Left ventricle myocardium inferior (tissue), 1 donor: ENCODE measurements at regions of chr13 and their contacts with region 1.

Region 1: GRCh38 chr13:75850916-75851315 is 214.8 kb downstream of the LMO7 start:
- DNase-seq: no peak
- H3K4me3 ChIP-seq: no peak overlapping the region
- H3K27ac ChIP-seq: no peak overlapping the region
- H3K4me1 ChIP-seq: peaks cover 24% of the 10 kb centered on the region
- H3K27me3 ChIP-seq: no peaks in the 10 kb centered on the region
- CTCF ChIP-seq: no peak

Region 2: GRCh38 chr13:75691183-75691582 is 159.7 kb before region 1 on chr13:
- intact Hi-C with region 1: loop called (anchors 10 kb)
- DNase-seq: no peak
- H3K4me3 ChIP-seq: no peak overlapping the region
- H3K27ac ChIP-seq: no peak overlapping the region
- H3K4me1 ChIP-seq: no peaks in the 10 kb centered on the region
- H3K27me3 ChIP-seq: no peaks in the 10 kb centered on the region
- CTCF ChIP-seq: no peak

Region 3: DNA sequence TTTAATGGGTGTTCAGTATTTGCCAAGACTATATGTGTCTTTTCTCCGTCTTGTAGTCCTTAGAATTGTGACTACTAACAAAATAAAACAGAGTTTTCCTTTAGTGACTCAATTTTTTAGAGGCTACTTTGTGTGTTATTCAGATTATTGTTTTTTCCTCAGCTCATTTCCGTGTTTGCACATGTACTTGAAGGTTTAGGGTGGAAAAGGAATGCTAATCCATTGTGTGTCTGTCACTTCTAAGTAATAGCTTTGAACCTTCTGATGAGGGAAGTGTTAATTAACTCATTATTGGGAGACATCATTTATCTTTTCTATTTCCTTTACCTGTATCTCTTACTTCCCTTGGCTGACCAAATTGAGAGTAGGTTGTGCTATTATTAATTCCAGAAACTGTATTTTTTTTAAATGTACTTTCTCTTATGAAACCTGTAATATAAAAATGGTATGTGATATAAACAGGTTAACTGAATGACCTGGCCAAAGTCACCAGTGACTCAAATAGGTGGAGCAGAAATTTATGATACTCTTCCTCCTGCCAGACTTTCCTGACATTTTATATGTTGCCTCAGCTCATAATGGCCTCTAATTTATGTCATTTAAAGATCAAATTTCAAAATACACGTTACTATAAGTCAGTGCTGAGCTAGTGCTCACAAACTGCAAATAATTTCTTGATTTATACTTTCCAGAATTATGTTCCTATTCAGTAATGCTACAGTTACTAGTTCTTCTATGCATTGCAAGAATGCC is 126.0 kb before region 1 on chr13:
- intact Hi-C with region 1: no loop called
- DNase-seq: no peak
- H3K4me3 ChIP-seq: no peak overlapping the region
- H3K27ac ChIP-seq: no peak overlapping the region
- H3K4me1 ChIP-seq: peaks cover 5% of the 10 kb centered on the region
- H3K27me3 ChIP-seq: no peaks in the 10 kb centered on the region
- CTCF ChIP-seq: no peak